ENCODE measurements at regions of chr5 and their contacts with region 1.

Region 1: DNA sequence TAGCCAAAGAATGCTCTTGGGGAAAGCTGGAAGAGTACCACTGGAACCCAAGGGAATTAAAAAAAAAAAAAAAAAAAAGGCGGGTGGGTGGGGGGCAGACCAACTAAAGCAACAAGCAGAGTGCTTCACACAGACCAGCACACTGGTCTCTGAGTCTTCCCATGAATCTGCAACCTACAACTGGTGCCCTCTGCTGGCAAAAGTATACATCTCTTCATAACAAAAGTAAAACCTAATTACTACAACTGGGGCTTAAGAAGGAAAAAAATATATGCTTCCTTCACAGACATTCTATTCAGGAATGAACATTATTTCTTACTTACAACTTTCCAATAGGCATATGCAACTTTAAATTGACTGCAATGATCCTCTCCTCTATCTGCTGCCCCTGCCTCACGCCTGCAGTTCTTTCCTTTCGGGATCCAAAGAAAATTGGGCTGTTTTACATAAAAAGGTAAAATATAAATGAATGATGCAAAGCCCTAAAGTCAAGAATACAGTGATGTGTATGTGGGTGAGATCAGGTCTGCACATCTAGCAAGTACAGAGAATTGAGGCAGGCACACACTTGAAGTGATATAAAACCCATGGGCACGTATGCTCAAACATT is 7.2 kb upstream of the KLHL3 start:
- DNase-seq: peak; percentile 77
- ATAC-seq: peak; percentile 84
- H3K4me3 ChIP-seq: no peak overlapping the region
- H3K27ac ChIP-seq: no peak overlapping the region
- H3K4me1 ChIP-seq: peaks cover 19% of the 10 kb centered on the region
- H3K27me3 ChIP-seq: no peaks in the 10 kb centered on the region
- CTCF ChIP-seq: peak; percentile 69
- EP300 ChIP-seq: no peak
- POLR2A ChIP-seq: no peak
- RAD21 ChIP-seq: 0 out of 2 replicates have a peak, but pooled peaks have one; percentile 17

Region 2: DNA sequence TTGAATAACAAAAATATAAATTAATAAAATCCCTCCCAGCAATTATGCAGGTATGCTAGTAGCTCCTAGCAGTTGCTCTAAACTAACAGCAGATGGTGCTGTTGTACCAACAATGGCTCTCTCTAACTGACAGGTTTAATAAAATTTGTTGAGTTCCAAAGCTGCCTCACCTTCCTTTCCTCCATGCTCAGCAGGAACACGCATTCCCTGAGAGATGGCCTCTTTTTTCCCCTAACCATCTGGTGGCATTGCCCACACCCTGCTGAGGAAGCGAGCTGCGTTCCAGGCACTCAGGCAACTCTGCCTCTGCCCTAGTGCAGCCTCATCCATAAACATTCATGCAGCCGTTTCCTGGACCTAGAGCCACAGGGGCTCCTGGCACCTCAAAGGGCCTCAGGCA is 113.5 kb before region 1 on chr5:
- CTCF ChIA-PET with region 1: interaction called, 37 read pairs
- POLR2A ChIA-PET with region 1: no interaction called
- in situ Hi-C with region 1: loop called (anchors 5 kb)
- intact Hi-C with region 1: loop called (anchors 1 kb)
- DNase-seq: peak; percentile 41
- ATAC-seq: peak; percentile 94
- H3K4me3 ChIP-seq: no peak overlapping the region
- H3K27ac ChIP-seq: no peak overlapping the region
- H3K4me1 ChIP-seq: no peaks in the 10 kb centered on the region
- H3K27me3 ChIP-seq: no peaks in the 10 kb centered on the region
- CTCF ChIP-seq: peak; percentile 82
- EP300 ChIP-seq: no peak
- POLR2A ChIP-seq: no peak
- RAD21 ChIP-seq: peak; percentile 82

Region 3: DNA sequence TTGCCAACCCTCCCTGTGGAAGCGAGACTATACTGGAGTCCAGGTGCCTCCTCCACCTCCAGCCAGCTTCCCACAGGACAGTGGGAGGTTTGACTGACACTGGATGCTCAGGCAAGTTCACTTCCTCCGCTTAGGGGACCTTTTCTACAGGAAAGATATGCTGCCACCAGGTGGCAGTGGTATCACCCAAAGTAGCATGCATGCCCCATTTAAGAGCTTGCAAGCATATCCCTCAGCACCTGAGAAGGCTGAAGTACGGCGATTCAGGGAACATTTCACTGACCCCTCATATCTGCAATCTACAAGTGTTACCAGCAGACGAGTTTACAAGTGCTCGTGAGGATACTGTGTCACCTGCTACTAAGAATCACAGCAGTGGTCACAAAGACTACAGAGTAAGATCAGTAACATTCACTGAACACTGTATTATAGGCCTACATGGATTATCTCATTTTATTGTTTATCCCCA is 82.8 kb before region 1 on chr5:
- CTCF ChIA-PET with region 1: interaction called, 18 read pairs
- POLR2A ChIA-PET with region 1: no interaction called
- in situ Hi-C with region 1: loop called (anchors 5 kb)
- intact Hi-C with region 1: loop called (anchors 1 kb)
- DNase-seq: peak; percentile 63
- ATAC-seq: peak; percentile 95
- H3K4me3 ChIP-seq: no peak overlapping the region
- H3K27ac ChIP-seq: no peak overlapping the region
- H3K4me1 ChIP-seq: no peaks in the 10 kb centered on the region
- H3K27me3 ChIP-seq: no peaks in the 10 kb centered on the region
- CTCF ChIP-seq: peak; percentile 89
- EP300 ChIP-seq: no peak
- POLR2A ChIP-seq: no peak
- RAD21 ChIP-seq: peak; percentile 66